PC-9 (cell line): ENCODE measurements at regions of chr19 and their contacts with region 1.

Region 1: DNA sequence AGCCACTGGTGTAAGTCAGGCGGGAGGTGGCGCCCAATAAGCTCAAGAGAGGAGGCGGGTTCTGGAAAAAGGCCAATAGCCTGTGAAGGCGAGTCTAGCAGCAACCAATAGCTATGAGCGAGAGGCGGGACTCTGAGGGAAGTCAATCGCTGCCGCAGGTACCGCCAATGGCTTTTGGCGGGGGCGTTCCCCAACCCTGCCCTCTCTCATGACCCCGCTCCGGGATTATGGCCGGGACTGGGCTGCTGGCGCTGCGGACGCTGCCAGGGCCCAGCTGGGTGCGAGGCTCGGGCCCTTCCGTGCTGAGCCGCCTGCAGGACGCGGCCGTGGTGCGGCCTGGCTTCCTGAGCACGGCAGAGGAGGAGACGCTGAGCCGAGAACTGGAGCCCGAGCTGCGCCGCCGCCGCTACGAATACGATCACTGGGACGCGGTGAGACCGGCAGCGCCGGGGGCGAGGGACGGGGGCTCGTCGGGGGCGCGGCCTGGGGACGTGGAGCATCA is at the start of gene ALKBH7:
- DNase-seq: peak; percentile 92 to 96
- H3K4me3 ChIP-seq: peak within 1 kb of the TSS; percentile 90
- H3K27ac ChIP-seq: peak within 1 kb of the TSS; percentile 79
- H3K4me1 ChIP-seq: no peaks in the 10 kb centered on the region
- H3K27me3 ChIP-seq: no peaks in the 10 kb centered on the region
- CTCF ChIP-seq: no peak
- total RNA-seq, gene ALKBH7: 53.6 and 75.7 TPM in 2 replicates

Region 2: GRCh38 chr19:6343462-6343861 is 29.2 kb before region 1 on chr19:
- CTCF ChIA-PET with region 1: no interaction called
- POLR2A ChIA-PET with region 1: no interaction called
- intact Hi-C with region 1: no loop called
- DNase-seq: no peak
- H3K4me3 ChIP-seq: no peak overlapping the region
- H3K27ac ChIP-seq: no peak overlapping the region
- H3K4me1 ChIP-seq: no peaks in the 10 kb centered on the region
- H3K27me3 ChIP-seq: no peaks in the 10 kb centered on the region
- CTCF ChIP-seq: no peak

Region 3: DNA sequence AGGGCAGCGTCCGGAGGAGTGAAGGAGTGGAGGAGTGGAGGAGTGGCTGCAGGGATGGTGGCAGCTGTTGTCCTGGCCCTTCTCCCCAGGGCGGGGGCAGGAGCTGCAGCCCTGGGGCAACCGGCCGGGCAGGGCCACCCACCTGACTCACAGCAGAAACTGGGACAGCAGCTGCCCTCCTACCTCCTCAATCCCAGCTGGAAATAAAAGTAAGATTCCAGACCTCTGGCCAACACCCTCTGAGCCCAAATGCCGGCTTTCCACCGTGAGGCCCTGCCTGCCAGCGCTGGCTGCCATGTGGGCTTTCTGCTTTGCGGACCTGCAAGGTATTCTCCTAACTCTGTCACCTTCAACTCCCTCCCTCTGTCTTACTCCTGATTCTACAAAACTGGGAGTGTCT is 14.6 kb before region 1 on chr19:
- CTCF ChIA-PET with region 1: no interaction called
- POLR2A ChIA-PET with region 1: interaction called, 18 read pairs
- intact Hi-C with region 1: no loop called
- DNase-seq: peak; percentile 37 to 62
- H3K4me3 ChIP-seq: peak overlapping the region; percentile 35; the same call in 1 of the 2 replicates
- H3K27ac ChIP-seq: no peak overlapping the region
- H3K4me1 ChIP-seq: peaks cover 6% of the 10 kb centered on the region; the same call in 1 of the 2 replicates
- H3K27me3 ChIP-seq: no peaks in the 10 kb centered on the region
- CTCF ChIP-seq: no peak

Region 4: GRCh38 chr19:6393074-6393983 is 20.7 kb after region 1 on chr19 and contains the start of gene GTF2F1:
- CTCF ChIA-PET with region 1: no interaction called
- POLR2A ChIA-PET with region 1: no interaction called
- intact Hi-C with region 1: loop called (anchors 1 kb)
- DNase-seq: peak; percentile 72 to 82
- H3K4me3 ChIP-seq: peak within 1 kb of the TSS; percentile 94
- H3K27ac ChIP-seq: peak within 1 kb of the TSS; percentile 65
- H3K4me1 ChIP-seq: peaks cover 5% of the 10 kb centered on the region
- H3K27me3 ChIP-seq: no peaks in the 10 kb centered on the region
- CTCF ChIP-seq: no peak
- total RNA-seq, gene GTF2F1: 40.9 and 43.8 TPM in 2 replicates

Region 5: DNA sequence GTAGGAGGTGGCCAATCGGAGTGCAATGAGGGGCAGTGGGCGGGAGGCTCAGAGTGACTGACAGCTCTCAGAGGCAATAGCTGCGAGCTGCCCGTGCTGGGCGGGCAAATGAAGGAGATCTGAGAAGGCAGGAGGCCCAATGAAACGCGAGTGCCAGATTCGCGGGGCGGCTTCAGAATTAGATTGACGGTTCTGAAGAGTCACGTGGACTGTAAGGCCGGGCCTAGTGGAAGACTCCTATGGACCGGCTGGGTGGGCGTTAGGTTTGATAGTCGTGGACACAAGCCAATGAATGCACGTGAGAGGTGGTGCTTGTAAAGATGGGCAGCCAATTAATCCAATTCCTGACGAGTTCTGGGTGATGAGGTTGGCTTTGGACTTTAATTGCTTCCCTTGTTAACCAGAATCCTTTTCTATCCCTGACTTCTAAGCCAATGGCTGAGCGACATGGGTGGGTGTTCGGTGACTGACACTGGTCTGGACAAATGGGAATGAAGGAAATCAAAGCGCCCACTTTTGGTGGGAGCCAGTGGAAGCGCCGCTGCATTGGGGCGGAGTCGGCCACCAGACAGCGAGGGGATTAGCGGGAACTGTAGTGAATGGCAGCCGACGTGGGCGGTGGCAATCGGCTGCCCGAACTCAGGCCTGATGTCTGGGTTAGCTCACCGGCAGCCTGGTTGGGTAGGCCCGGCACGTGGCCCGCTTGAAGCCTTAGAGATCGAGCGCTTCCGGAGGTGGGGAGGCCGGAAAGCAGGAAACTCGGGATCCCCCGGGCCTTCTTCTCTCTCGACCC is 52.5 kb after region 1 on chr19:
- CTCF ChIA-PET with region 1: interaction called, 3 read pairs
- POLR2A ChIA-PET with region 1: no interaction called
- intact Hi-C with region 1: loop called (anchors 1 kb)
- DNase-seq: peak; percentile 97 to 98
- H3K4me3 ChIP-seq: no peak overlapping the region
- H3K27ac ChIP-seq: peak overlapping the region; percentile 18; the same call in 1 of the 2 replicates
- H3K4me1 ChIP-seq: peaks cover 10% of the 10 kb centered on the region
- H3K27me3 ChIP-seq: no peaks in the 10 kb centered on the region
- CTCF ChIP-seq: no peak

Region 6: DNA sequence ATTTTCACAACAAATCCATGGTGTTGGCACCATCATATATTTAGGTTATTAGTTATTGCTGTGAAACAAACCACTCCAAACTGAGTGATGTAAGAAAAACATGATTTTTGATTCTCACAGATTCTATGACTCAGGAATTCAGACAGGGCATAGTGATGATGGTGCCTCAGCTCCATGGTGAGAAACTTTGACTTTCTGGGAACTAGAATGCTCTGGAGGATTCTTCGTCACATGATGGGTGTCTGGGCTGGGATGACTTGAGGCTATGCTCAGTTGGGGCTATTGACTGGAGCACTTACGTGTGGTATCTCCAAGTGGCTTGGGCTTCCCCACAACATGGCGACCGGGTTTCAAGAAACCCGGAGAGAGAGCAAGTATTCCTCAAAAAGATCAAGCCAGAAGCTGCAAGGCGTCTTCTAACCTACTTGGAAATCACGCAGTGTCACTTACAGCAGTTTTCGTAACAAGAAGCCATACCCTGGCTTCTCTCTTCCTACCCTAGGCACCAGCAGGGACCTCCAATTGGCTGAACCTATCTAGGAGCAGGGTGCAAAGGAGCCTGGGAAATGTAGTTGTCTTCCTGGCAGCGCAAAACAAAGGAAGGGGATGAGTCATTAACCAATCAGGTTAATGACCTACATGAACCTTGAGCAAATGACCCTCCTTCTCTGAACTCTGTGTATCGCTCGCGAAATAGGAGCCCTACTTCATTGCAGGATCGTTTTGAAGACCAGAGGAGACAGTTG is 422.2 kb after region 1 on chr19:
- CTCF ChIA-PET with region 1: no interaction called
- POLR2A ChIA-PET with region 1: no interaction called
- intact Hi-C with region 1: no loop called
- DNase-seq: no peak
- H3K4me3 ChIP-seq: no peak overlapping the region
- H3K27ac ChIP-seq: no peak overlapping the region
- H3K4me1 ChIP-seq: peaks cover 2% of the 10 kb centered on the region
- H3K27me3 ChIP-seq: no peaks in the 10 kb centered on the region
- CTCF ChIP-seq: no peak

Region 7: GRCh38 chr19:7018828-7019227 is 646.2 kb after region 1 on chr19:
- CTCF ChIA-PET with region 1: no interaction called
- POLR2A ChIA-PET with region 1: no interaction called
- intact Hi-C with region 1: no loop called
- DNase-seq: no peak
- H3K4me3 ChIP-seq: no peak overlapping the region
- H3K27ac ChIP-seq: no peak overlapping the region
- H3K4me1 ChIP-seq: no peaks in the 10 kb centered on the region
- H3K27me3 ChIP-seq: peaks cover 18% of the 10 kb centered on the region
- CTCF ChIP-seq: no peak